Lower leg skin (tissue), 4 donors: ENCODE measurements at regions of chr4 and their contacts with region 1.

Region 1: GRCh38 chr4:98467627-98468072 is 190.8 kb downstream of the TSPAN5 start:
- DNase-seq: peak; percentile 73 to 93
- H3K4me3 ChIP-seq: no peak overlapping the region
- CTCF ChIP-seq: peak in 1 of 3 donors; percentile 13
- POLR2A ChIP-seq: no peak

Region 2: GRCh38 chr4:98352396-98352795 is 115.3 kb before region 1 on chr4:
- intact Hi-C with region 1: no loop called
- DNase-seq: no peak
- H3K4me3 ChIP-seq: no peak overlapping the region
- CTCF ChIP-seq: no peak
- POLR2A ChIP-seq: no peak

Region 3: GRCh38 chr4:98501383-98501782 is 33.7 kb after region 1 on chr4:
- intact Hi-C with region 1: no loop called
- DNase-seq: no peak
- H3K4me3 ChIP-seq: no peak overlapping the region
- CTCF ChIP-seq: no peak
- POLR2A ChIP-seq: no peak

Region 4: DNA sequence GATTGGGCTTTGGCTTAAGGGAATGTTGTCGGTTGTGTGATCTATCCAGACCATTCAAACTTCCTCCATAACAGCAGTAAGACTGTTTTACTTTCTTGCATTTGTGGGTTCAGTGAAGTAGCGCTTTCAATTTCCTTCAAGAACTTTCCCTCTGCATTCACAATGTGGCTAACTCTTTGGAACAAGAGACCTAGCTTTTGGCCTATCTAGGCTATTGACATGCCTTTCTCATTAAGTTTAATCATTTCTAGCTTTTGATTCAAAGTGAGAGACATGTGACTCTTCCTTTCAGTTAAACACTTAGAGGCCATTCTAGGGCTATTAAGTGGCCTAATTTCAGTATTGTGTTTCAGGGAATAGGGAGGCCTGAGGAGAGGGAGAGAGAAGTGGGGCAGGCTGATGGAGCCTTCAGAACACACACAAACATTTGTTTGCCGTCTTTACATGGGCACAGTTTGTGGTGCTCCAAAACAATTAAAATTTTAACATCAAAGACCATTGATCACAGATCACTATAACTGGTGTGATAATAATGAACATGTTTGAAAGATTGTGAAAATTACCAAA is 586.9 kb after region 1 on chr4:
- intact Hi-C with region 1: loop called (anchors 10 kb)
- DNase-seq: no peak
- H3K4me3 ChIP-seq: no peak overlapping the region
- CTCF ChIP-seq: no peak
- POLR2A ChIP-seq: no peak